Gastrocnemius medialis (tissue), 4 donors: ENCODE measurements at regions of chr12 and their contacts with region 1.

Region 1: DNA sequence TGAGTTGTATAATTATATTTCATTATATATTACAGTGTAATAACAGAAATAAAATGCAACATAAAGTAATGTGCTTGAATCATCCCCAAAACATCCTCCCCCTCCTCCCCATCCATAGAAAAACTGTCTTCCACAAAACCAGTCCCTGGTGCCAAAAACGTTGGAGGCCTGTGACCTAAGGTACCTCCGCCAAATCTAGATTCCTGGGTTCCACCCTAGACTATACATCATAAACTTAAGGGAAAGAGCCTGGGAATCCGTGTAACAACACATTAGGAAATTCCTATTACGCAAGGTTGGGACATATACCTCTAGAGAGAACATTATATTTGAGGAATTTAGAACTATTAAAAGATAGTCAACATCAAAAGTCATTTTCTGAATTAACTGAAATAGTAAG is 38.0 kb downstream of the SPPL3 start:
- DNase-seq: no peak
- ATAC-seq: no peak
- H3K4me3 ChIP-seq: no peak overlapping the region
- H3K27ac ChIP-seq: no peak overlapping the region
- H3K4me1 ChIP-seq: peaks cover 16 to 30% of the 10 kb centered on the region in 2 donors
- H3K27me3 ChIP-seq: no peaks in the 10 kb centered on the region
- CTCF ChIP-seq: no peak
- POLR2A ChIP-seq: no peak

Region 2: GRCh38 chr12:120775862-120776552 is 90.1 kb before region 1 on chr12:
- in situ Hi-C with region 1: no loop called
- intact Hi-C with region 1: no loop called
- DNase-seq: no peak
- ATAC-seq: peak in 1 of 2 donors; percentile 55
- H3K4me3 ChIP-seq: no peak overlapping the region
- H3K27ac ChIP-seq: peak overlapping the region in 3 of 4 donors; percentile 30 to 64 (median 47)
- H3K4me1 ChIP-seq: peaks cover 8 to 25% of the 10 kb centered on the region in 2 donors
- H3K27me3 ChIP-seq: no peaks in the 10 kb centered on the region
- CTCF ChIP-seq: peak in 1 of 5 experiments; percentile 27
- POLR2A ChIP-seq: no peak

Region 3: DNA sequence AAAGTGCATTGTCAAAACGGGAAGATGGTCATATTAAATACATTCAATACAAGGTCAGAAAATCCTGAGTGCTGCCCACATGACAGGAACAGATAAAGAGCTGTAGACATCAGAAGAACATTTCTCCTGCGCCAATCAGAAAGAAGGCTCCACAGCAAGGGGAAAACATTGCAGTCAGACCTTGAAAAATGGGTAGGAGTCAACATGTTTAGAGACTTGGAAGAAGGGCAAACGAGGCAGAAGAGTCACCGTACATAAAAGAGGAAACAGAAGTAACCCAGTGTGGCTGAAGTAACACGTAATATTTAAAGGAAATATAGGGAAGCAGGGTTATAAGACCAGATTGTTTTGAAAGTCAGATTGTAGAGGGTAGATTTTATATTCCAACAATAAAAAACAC is 26.2 kb after region 1 on chr12:
- in situ Hi-C with region 1: no loop called
- intact Hi-C with region 1: no loop called
- DNase-seq: no peak
- ATAC-seq: no peak
- H3K4me3 ChIP-seq: no peak overlapping the region
- H3K27ac ChIP-seq: peak overlapping the region in 1 of 4 donors; percentile 10
- H3K4me1 ChIP-seq: peaks cover 12 to 43% of the 10 kb centered on the region in 2 donors
- H3K27me3 ChIP-seq: no peaks in the 10 kb centered on the region
- CTCF ChIP-seq: no peak
- POLR2A ChIP-seq: no peak

Region 4: DNA sequence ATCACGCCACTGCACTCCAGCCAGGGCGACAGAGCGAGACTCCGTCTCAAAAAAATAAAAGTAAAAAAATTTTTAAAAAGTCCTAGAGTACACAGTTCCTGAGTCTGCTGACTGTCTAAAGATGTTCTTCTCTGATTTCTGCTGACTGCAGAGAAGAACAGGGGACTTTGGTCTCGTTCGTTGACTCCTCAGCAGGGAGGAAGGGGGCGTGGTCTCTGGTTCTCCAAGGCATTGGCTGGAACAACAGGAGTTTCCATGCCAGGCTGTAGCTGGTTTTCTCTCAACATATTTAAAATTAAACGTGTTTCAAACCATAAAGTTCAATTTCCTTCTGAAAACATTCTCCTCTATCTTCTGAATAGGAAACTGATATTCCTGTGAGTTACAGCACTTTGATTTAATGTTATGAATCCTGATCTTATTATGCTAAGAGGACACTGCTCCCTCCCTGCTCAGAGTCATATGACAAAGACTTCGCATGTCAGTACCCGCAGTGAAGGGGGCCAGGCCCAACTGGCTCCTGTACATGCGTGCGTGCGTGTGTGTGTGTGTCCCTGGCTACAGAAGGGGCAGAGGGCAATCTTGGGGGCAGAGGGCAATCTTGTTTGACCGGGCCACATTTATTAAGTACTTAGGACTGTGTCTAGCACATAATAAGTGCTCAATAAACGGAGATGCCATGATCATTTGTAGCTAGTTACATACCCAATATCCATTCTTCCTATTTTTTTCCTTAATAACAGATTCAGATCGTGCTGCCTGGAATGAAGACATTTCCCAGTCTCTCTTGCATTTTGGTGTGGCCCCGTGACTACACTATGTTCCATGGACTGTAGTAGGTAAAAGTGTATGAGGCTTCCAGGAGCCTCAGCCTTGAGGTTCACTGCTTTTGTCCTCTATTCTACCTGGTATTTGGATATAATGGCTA is 95.8 kb after region 1 on chr12:
- in situ Hi-C with region 1: no loop called
- intact Hi-C with region 1: loop called (anchors 10 kb)
- DNase-seq: no peak
- ATAC-seq: no peak
- H3K4me3 ChIP-seq: no peak overlapping the region
- H3K27ac ChIP-seq: no peak overlapping the region
- H3K4me1 ChIP-seq: no peaks in the 10 kb centered on the region
- H3K27me3 ChIP-seq: no peaks in the 10 kb centered on the region
- CTCF ChIP-seq: no peak
- POLR2A ChIP-seq: no peak